Panc1 (cell line): ENCODE measurements at regions of chr9 and their contacts with region 1.

Region 1: DNA sequence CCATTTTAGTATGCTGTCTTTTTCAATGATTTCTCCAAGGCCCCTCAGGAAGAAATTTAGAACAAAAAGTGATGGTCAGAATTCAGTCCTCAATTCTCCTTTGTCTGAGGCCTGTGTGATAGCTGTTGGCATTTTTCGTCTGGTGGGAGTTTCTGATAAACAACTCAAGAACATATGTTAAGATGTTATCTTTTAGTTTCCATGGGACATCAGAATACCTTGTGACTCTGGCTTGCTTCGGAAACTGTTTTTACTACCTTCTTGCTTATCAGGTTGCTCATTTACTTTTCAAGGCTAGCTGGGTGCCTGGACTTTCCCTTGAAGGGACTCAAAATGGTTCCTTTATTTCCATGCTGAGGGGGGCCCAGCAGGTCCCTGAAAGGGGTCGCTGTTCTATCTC is 97.2 kb downstream of the INVS start:
- DNase-seq: no peak
- ATAC-seq: no peak
- H3K4me3 ChIP-seq: no peak overlapping the region
- H3K27ac ChIP-seq: no peak overlapping the region
- H3K4me1 ChIP-seq: no peaks in the 10 kb centered on the region
- H3K27me3 ChIP-seq: no peaks in the 10 kb centered on the region
- CTCF ChIP-seq: no peak

Region 2: DNA sequence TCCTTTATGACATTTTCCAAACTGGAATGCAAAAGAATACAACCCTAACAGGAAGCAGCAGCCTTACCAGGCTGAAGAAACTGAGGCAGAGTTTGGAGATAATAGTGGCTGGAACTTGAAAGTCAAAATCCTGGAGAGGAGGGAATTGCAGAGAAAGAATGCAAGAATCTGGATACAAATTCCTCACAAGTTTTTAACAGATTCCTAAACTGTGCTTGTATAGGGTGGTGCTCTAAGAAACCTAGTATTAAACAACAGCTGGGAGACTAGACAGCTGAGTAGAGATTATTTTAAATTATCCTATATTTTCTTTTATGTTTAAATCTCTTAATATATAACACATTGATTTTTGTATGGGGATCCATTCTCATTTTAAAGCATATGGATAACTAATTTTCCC is 66.4 kb before region 1 on chr9:
- CTCF ChIA-PET with region 1: no interaction called
- POLR2A ChIA-PET with region 1: no interaction called
- in situ Hi-C with region 1: no loop called
- intact Hi-C with region 1: loop called (anchors 10 kb)
- DNase-seq: no peak
- ATAC-seq: no peak
- H3K4me3 ChIP-seq: no peak overlapping the region
- H3K27ac ChIP-seq: no peak overlapping the region
- H3K4me1 ChIP-seq: no peaks in the 10 kb centered on the region
- H3K27me3 ChIP-seq: no peaks in the 10 kb centered on the region
- CTCF ChIP-seq: no peak

Region 3: DNA sequence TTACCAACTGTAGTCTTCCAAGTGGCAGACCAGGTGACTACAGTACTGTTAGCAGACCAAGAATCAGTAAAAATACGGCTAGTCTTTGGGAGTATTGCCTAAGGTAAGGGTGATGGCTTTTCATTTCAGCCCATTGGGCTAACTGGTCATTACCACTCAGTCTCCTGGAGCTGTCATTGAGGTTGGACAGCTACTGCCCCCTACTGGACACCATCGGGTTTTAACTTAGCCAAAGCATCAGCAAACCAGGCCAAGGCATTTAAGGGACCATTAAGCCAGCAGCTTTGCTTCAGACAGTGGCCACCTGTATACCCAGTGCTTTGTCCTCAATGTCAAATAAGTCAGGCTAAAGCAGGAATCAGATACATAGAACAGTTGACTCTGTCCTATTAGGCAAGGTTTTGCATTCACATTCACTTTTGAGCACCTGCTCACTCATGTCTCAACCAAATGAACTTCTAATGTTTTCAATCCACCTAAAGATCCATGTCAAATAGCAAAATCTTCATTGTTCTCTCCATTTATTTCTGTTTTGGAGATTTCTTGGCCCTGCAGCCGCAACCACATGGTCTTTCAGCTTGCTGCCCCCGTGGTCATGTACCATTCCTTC is 20.1 kb after region 1 on chr9:
- CTCF ChIA-PET with region 1: interaction called, 11 read pairs
- POLR2A ChIA-PET with region 1: no interaction called
- in situ Hi-C with region 1: no loop called
- intact Hi-C with region 1: no loop called
- DNase-seq: peak; percentile 42
- ATAC-seq: peak; percentile 69
- H3K4me3 ChIP-seq: no peak overlapping the region
- H3K27ac ChIP-seq: no peak overlapping the region
- H3K4me1 ChIP-seq: no peaks in the 10 kb centered on the region
- H3K27me3 ChIP-seq: no peaks in the 10 kb centered on the region
- CTCF ChIP-seq: peak; percentile 70